Activated CD4-positive, alpha-beta memory T cell treated with anti-CD3 and anti-CD28 coated beads for 36 hours (primary cell): ENCODE measurements at regions of chr7 and their contacts with region 1.

Region 1: GRCh38 chr7:150737265-150738055 is at the start of gene GIMAP5:
- DNase-seq: peak; percentile 77
- H3K4me3 Mint-ChIP-seq: peak within 1 kb of the TSS; percentile 87
- H3K27ac Mint-ChIP-seq: peak within 1 kb of the TSS; percentile 97
- H3K4me1 Mint-ChIP-seq: peaks cover 72% of the 10 kb centered on the region
- H3K27me3 Mint-ChIP-seq: no peaks in the 10 kb centered on the region
- total RNA-seq, gene GIMAP5: 45.9 to 48.3 TPM

Region 2: DNA sequence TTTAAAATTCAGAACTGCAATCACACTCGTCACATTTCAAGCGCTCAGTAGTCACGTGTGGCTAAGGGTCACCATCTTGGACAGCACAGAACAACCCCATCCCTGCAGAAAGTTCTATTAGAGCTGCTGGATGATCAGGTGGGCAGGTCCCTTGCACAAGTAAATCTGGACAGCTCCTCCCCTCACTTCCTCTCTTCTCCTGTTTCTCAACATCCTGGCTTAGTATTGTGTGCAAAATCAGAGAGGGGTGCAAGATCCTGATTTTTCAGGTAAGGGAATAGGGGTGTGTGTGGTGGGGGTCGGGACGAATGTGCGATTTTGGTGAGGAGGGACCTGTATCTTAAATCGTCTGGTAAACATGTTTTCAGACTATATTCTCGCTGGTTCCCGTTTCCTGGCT is 170.3 kb before region 1 on chr7 and contains the start of gene GIMAP4:
- CTCF ChIA-PET with region 1: interaction called, 9 read pairs
- POLR2A ChIA-PET with region 1: interaction called, 18 read pairs
- intact Hi-C with region 1: loop called (anchors 1 kb)
- DNase-seq: peak; percentile 55
- H3K4me3 Mint-ChIP-seq: peak within 1 kb of the TSS; percentile 94
- H3K27ac Mint-ChIP-seq: peak within 1 kb of the TSS; percentile 98
- H3K4me1 Mint-ChIP-seq: peaks cover 65% of the 10 kb centered on the region
- H3K27me3 Mint-ChIP-seq: no peaks in the 10 kb centered on the region
- total RNA-seq, gene GIMAP4: 128 to 140 TPM

Region 3: GRCh38 chr7:150620617-150621371 is 116.7 kb before region 1 on chr7:
- CTCF ChIA-PET with region 1: no interaction called
- POLR2A ChIA-PET with region 1: interaction called, 5 read pairs
- intact Hi-C with region 1: loop called (anchors 1 kb)
- DNase-seq: no peak
- H3K4me3 Mint-ChIP-seq: peak overlapping the region; percentile 29
- H3K27ac Mint-ChIP-seq: peak overlapping the region; percentile 95
- H3K4me1 Mint-ChIP-seq: peaks cover 56% of the 10 kb centered on the region
- H3K27me3 Mint-ChIP-seq: no peaks in the 10 kb centered on the region

Region 4: DNA sequence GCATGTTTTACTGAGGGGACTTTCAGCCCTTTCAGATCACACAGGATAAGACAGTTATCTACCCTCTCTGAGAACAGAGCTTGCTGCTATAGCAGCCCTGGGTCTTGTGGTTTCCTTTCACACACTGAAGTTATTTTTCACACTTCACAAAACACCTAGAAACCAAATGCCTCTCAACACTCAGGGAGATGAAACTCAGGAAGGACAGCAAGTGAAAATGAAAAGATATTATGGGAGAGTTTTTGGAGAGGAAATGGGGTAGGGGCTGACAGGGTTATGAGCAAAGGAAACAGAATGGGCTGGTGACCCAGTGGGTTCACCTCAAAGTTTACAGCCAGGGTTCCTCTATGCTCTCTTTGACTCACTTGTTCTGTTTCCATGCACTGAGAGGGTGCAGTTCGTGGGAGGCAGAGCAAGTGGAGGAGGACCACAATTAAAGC is 69.0 kb before region 1 on chr7:
- CTCF ChIA-PET with region 1: interaction called, 5 read pairs
- POLR2A ChIA-PET with region 1: interaction called, 9 read pairs
- intact Hi-C with region 1: loop called (anchors 1 kb)
- DNase-seq: peak; percentile 81
- H3K4me3 Mint-ChIP-seq: peak overlapping the region; percentile 18
- H3K27ac Mint-ChIP-seq: peak overlapping the region; percentile 98
- H3K4me1 Mint-ChIP-seq: peaks cover 82% of the 10 kb centered on the region
- H3K27me3 Mint-ChIP-seq: no peaks in the 10 kb centered on the region

Region 5: DNA sequence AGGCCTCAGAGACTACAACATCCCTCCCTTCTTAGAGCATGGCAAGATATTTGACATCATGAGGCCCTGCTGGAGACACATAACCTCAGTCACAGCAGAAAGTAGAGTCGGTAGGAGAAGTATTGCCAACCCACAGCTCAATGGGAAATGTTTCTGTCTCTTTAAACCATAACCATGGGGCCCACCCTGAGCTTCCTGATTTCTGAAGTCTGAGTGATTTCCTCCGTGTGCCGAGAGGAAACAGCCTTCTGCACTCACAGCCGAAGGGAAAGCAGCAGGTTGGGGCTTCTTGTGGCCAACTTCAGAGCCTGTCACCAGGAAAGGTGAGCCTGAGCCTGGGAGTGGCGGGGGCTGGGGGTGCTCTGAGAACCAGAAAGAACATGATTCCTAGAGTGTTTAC is 21.1 kb before region 1 on chr7 and contains the start of gene GIMAP1:
- CTCF ChIA-PET with region 1: interaction called, 39 read pairs
- POLR2A ChIA-PET with region 1: interaction called, 45 read pairs
- intact Hi-C with region 1: loop called (anchors 1 kb)
- DNase-seq: peak; percentile 78
- H3K4me3 Mint-ChIP-seq: peak within 1 kb of the TSS; percentile 96
- H3K27ac Mint-ChIP-seq: peak within 1 kb of the TSS; percentile 92
- H3K4me1 Mint-ChIP-seq: peaks cover 50% of the 10 kb centered on the region
- H3K27me3 Mint-ChIP-seq: no peaks in the 10 kb centered on the region
- total RNA-seq, gene GIMAP1: 6.0 to 6.2 TPM